CD14-positive monocyte (primary cell): ENCODE measurements at regions of chr2 and their contacts with region 1.

Region 1: DNA sequence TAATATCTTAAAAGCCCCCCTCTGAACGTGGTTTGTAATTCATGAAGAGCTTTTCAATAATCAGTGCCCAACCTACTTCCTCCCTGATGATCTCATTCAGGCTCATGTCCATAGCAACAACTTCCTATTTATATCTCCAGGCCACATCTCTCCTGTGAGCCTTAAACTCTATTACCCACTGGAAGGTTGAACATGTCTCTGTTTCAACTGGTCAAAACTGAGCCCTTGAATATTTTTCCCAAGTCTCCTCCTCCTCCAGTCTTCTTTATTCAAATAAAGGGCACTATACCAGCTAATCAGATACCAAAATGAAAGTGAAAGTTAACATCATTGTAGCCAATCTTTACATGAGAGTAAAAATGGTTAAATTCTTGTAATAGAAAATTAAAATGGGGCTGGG is 63.7 kb upstream of the ITGA4 start:
- DNase-seq: peak; percentile 48 to 77 (median 76)
- H3K4me3 ChIP-seq: peak overlapping the region in 1 of 3 experiments; percentile 29
- H3K4me3 Mint-ChIP-seq: peak overlapping the region; percentile 50 to 60
- H3K27ac ChIP-seq: peak overlapping the region; percentile 26 to 79
- H3K27ac Mint-ChIP-seq: peak overlapping the region; percentile 83 to 95 (median 89)
- H3K4me1 ChIP-seq: peaks cover 25 to 41% of the 10 kb centered on the region in 2 donors
- H3K4me1 Mint-ChIP-seq: peaks cover 34% of the 10 kb centered on the region
- H3K27me3 ChIP-seq: no peaks in the 10 kb centered on the region
- H3K27me3 Mint-ChIP-seq: no peaks in the 10 kb centered on the region
- CTCF ChIP-seq: no peak

Region 2: DNA sequence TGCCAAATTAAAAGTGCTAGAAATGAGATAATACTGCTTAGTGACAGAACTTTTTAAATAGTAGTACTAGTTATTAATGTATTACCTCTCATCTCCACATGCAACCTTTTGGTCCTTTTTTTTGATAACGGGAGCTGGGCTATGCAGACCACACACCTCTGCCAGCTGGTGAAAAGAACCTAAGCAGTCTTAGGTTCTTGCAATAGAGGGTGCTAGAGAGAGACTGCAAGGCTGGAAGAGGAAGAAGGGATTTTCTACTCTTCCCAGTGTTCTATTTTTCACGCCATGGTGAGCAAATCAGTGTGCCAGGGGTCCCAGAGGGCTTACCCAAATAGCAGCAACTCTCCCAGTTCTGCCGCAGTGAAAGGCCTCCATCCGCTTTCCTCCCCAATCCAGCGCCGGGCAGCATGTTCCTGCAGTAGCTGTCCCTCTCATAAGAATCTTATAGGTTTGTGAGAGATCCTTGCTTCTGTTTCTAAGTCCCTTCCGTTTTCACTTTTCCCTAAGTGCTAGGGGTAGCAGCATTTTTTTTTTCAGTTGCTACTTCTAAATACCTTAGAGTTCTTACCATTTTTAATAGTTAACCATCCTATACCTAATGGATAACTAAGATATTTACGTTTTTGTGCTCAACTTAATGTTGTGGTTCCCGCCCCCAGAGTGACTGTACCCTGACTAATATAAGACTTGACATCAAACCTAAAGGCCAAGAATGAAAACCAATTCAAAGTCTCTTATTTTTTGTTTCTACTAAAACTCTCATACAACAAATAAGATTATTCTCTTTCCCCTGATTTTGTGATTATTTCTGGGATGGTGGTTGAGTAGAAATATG is 482.4 kb before region 1 on chr2:
- intact Hi-C with region 1: no loop called
- DNase-seq: no peak
- H3K4me3 ChIP-seq: no peak overlapping the region
- H3K4me3 Mint-ChIP-seq: no peak overlapping the region
- H3K27ac ChIP-seq: no peak overlapping the region
- H3K27ac Mint-ChIP-seq: no peak overlapping the region
- H3K4me1 ChIP-seq: no peaks in the 10 kb centered on the region
- H3K4me1 Mint-ChIP-seq: no peaks in the 10 kb centered on the region
- H3K27me3 ChIP-seq: no peaks in the 10 kb centered on the region
- H3K27me3 Mint-ChIP-seq: peaks cover 0 to 1% (median 0%) of the 10 kb centered on the region in 3 donors
- CTCF ChIP-seq: no peak

Region 3: DNA sequence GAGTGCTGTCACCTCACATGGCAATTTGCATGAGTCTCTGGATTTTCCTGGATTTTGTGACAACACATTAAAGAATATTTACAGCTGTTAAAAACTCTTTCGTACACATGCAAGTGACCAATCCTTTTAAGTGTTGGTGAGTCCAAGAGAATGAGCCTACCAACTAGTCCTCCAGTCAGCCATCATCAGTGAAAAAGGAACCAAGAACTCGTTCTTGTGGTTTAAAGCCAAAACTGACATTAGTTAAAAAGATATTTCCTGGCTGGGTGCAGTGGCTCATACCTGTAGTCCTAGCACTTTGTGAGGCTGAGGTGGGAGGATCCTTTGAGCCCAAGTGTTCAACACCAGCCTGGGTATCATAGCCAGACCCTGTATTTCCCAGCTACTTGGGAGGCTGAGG is 151.7 kb before region 1 on chr2:
- intact Hi-C with region 1: no loop called
- DNase-seq: no peak
- H3K4me3 ChIP-seq: no peak overlapping the region
- H3K4me3 Mint-ChIP-seq: no peak overlapping the region
- H3K27ac ChIP-seq: no peak overlapping the region
- H3K27ac Mint-ChIP-seq: no peak overlapping the region
- H3K4me1 ChIP-seq: peaks cover 15 to 23% of the 10 kb centered on the region in 2 donors
- H3K4me1 Mint-ChIP-seq: peaks cover 27% of the 10 kb centered on the region
- H3K27me3 ChIP-seq: no peaks in the 10 kb centered on the region
- H3K27me3 Mint-ChIP-seq: peaks cover 0 to 2% (median 2%) of the 10 kb centered on the region in 3 donors
- CTCF ChIP-seq: no peak

Region 4: GRCh38 chr2:181305301-181306123 is 88.0 kb before region 1 on chr2:
- intact Hi-C with region 1: loop called in 1 of 2 experiments (anchors 5 kb)
- DNase-seq: peak; percentile 24 to 66 (median 32)
- H3K4me3 ChIP-seq: peak overlapping the region in 2 of 3 experiments; percentile 19 to 33
- H3K4me3 Mint-ChIP-seq: peak overlapping the region; percentile 47 to 51
- H3K27ac ChIP-seq: peak overlapping the region; percentile 62 to 90
- H3K27ac Mint-ChIP-seq: peak overlapping the region; percentile 89 to 95 (median 94)
- H3K4me1 ChIP-seq: peaks cover 54 to 71% of the 10 kb centered on the region in 2 donors
- H3K4me1 Mint-ChIP-seq: peaks cover 71% of the 10 kb centered on the region
- H3K27me3 ChIP-seq: no peaks in the 10 kb centered on the region
- H3K27me3 Mint-ChIP-seq: no peaks in the 10 kb centered on the region
- CTCF ChIP-seq: no peak

Region 5: GRCh38 chr2:181407171-181407570 is 13.7 kb after region 1 on chr2:
- intact Hi-C with region 1: loop called in 1 of 2 experiments (anchors 2 kb)
- DNase-seq: peak; percentile 72 to 74 (median 73)
- H3K4me3 ChIP-seq: peak overlapping the region in 1 of 3 experiments; percentile 20
- H3K4me3 Mint-ChIP-seq: peak overlapping the region in 1 of 2 donors; percentile 48
- H3K27ac ChIP-seq: peak overlapping the region in 1 of 2 donors; percentile 72
- H3K27ac Mint-ChIP-seq: peak overlapping the region; percentile 74 to 91 (median 87)
- H3K4me1 ChIP-seq: peaks cover 34 to 48% of the 10 kb centered on the region in 2 donors
- H3K4me1 Mint-ChIP-seq: peaks cover 39% of the 10 kb centered on the region
- H3K27me3 ChIP-seq: no peaks in the 10 kb centered on the region
- H3K27me3 Mint-ChIP-seq: no peaks in the 10 kb centered on the region
- CTCF ChIP-seq: no peak